WTC11 (cell line): ENCODE measurements at regions of chr9 and their contacts with region 1.

Region 1: DNA sequence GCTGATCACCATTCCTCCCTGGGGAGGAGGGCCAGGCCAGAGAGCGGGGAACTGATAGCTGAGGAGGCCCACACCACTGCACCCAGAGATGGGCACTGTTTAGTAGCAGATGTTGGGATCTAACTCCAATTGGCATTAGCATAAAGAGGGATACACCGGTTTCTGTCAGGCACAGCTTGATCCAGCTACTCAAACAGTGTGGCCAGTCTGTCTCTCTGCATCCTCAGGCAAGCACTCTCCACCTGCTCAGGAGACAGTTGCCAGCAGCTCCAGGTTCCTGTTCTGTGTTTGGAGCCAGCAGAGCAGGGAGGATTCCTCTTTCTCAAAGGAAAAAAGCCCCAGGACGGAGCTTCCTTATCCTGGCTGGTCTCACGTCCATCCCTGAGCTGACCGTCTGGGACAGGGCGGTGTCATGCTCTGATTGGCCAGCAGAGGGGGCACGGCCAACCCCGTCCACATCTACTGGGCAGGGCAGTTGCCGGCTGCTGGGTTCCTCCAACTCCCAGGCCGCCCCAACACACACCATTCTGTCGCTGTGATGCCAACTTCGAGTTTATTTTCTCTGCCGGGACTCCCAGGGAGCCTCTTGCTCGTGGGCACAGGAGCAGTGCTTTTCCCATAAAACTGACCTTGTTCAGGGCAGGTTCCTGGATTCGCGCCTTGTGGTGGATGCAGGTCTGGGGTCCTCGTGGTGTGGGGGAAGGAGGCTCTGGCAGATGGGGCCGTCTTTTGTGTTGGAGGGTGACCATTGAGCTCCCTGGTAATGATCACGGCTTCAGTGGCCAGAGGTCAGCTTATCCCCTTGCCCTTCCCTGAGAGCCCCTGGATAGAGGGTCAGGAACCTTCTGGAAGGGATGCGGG is 47.9 kb downstream of the COL5A1 start:
- DNase-seq: peak; percentile 84
- ATAC-seq: peak; percentile 98
- H3K4me3 Mint-ChIP-seq: no peak overlapping the region
- H3K27ac Mint-ChIP-seq: no peak overlapping the region
- H3K4me1 Mint-ChIP-seq: no peaks in the 10 kb centered on the region
- H3K27me3 Mint-ChIP-seq: no peaks in the 10 kb centered on the region
- CTCF ChIP-seq: peak; percentile 88

Region 2: DNA sequence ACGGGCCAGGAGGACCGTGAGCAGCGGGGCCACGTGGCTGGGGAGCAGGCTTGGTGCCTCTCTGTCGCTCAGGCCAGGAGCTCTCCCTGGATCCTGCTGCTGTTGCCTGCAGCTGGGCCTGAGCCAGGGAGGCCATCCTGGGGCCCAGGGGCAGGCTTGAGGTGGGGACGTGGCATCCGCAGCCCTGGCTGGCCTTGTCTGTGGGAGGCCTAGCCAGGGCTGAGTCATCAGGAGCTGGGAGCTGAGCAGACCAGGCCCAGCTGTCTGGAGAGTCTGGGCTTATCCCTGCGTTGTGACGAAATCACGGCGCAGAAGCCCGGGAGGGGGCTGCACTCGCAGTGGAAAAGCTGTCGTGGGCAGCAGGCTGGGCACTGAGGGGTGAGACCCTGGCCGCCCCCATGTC is 186.7 kb before region 1 on chr9:
- CTCF ChIA-PET with region 1: interaction called, 12 read pairs
- POLR2A ChIA-PET with region 1: no interaction called
- DNase-seq: no peak
- ATAC-seq: no peak
- H3K4me3 Mint-ChIP-seq: no peak overlapping the region
- H3K27ac Mint-ChIP-seq: no peak overlapping the region
- H3K4me1 Mint-ChIP-seq: no peaks in the 10 kb centered on the region; the same call in 1 of the 2 replicates
- H3K27me3 Mint-ChIP-seq: peaks cover 18% of the 10 kb centered on the region
- CTCF ChIP-seq: no peak

Region 3: DNA sequence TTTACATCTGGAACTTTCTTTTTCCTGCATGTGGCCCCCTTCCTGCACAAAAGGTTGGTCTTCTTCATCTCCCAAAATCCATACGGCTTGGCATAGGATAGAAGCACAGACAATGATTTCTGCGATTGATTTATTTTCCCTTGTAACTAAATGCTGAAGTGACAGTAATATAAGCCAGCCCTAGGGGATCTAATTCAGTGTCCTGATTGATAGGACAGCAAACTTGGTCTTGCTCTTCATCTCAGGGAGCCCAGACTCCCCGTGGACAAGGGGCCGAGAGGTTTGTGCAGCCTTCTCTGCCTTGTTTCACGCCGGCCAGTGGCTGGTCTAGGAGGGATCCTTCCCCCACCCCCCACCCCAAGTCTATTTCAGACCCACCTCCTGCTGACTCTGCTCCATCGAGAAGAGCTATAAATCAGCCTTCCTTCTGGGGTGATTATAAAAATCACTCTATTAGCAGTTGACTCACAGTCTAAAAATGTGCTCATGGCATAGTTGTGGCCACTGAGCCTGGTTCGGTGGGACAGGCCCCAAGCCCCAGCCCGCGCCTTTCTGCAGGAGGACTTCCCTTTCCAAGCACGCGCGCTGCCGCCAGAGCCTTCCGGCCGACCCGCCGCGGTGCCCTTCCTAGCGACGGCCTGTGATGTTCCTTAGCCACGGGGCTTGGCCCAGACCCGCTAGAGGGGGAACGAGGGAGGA is 137.8 kb before region 1 on chr9:
- CTCF ChIA-PET with region 1: no interaction called
- POLR2A ChIA-PET with region 1: no interaction called
- DNase-seq: no peak
- ATAC-seq: no peak
- H3K4me3 Mint-ChIP-seq: no peak overlapping the region
- H3K27ac Mint-ChIP-seq: no peak overlapping the region
- H3K4me1 Mint-ChIP-seq: 0 out of 2 replicates have a peak, but pooled peaks cover 2% of the 10 kb centered on the region
- H3K27me3 Mint-ChIP-seq: no peaks in the 10 kb centered on the region
- CTCF ChIP-seq: no peak

Region 4: GRCh38 chr9:134670042-134670525 is 19.5 kb before region 1 on chr9:
- CTCF ChIA-PET with region 1: interaction called, 11 read pairs
- POLR2A ChIA-PET with region 1: no interaction called
- DNase-seq: no peak
- ATAC-seq: no peak
- H3K4me3 Mint-ChIP-seq: no peak overlapping the region
- H3K27ac Mint-ChIP-seq: no peak overlapping the region
- H3K4me1 Mint-ChIP-seq: peaks cover 9% of the 10 kb centered on the region
- H3K27me3 Mint-ChIP-seq: no peaks in the 10 kb centered on the region
- CTCF ChIP-seq: no peak

Region 5: DNA sequence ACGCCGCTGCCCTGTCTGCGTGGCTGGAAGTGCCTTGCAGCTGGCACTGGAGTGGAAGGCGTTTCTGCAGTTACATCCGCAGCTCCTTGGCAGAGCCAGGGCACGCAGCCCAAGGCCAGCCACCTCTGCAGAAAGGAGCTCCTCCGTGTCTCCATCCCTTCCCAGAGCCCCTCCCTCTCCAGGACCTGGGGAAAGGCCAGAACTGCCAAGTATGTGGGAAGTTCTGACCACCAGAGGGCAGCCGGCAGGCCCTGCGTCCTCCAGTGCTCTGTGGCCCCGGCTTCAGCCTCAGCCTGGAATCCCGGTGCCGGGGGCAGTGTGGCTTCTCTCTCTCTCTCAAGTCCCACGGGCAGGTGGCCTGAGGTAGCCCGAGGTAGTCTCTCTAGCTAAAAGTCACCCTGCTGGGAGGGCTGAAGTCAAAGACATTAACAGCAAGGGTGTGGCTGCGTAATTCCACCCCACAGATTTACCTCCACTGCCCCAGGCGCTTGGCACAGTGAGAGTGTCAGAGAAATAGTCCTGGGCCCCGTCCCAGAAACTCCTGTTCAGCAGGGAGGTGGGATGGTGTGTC is 89.4 kb after region 1 on chr9:
- CTCF ChIA-PET with region 1: interaction called, 12 read pairs
- POLR2A ChIA-PET with region 1: no interaction called
- DNase-seq: peak; percentile 86
- ATAC-seq: peak; percentile 92
- H3K4me3 Mint-ChIP-seq: no peak overlapping the region
- H3K27ac Mint-ChIP-seq: no peak overlapping the region
- H3K4me1 Mint-ChIP-seq: peaks cover 2% of the 10 kb centered on the region
- H3K27me3 Mint-ChIP-seq: no peaks in the 10 kb centered on the region
- CTCF ChIP-seq: peak; percentile 47

Region 6: GRCh38 chr9:134962070-134962967 is 272.8 kb after region 1 on chr9:
- CTCF ChIA-PET with region 1: no interaction called
- POLR2A ChIA-PET with region 1: no interaction called
- DNase-seq: no peak
- ATAC-seq: no peak
- H3K4me3 Mint-ChIP-seq: no peak overlapping the region
- H3K27ac Mint-ChIP-seq: no peak overlapping the region
- H3K4me1 Mint-ChIP-seq: peaks cover 1% of the 10 kb centered on the region
- H3K27me3 Mint-ChIP-seq: no peaks in the 10 kb centered on the region
- CTCF ChIP-seq: no peak